Activated CD4-positive, alpha-beta T cell treated with anti-CD3 and anti-CD28 coated beads, Interleukin-2, amount 10 ng/mL, durations not matched to agents 7 days and 5 days (primary cell): ENCODE measurements at regions of chr10 and their contacts with region 1.

Region 1: DNA sequence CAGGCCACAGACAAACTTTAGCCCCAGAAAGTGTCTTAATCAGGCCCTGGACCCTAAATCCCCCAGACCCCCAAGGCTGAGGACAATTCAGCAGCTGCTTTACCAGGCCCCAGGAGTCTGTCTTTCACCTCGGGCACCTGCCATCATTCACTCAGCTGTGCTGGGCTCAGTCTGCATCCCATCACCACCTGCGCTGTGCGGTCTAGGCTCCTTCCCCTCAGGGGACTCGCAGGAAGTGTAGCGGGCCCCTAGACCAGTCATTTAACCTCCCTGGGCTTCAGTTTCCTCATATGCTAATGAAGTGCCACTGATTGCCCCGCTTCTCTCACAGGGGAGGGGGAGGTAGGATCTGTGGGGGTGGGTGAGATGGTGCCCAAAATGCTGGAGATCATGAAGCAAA is 76.4 kb upstream of the ZMIZ1 start:
- DNase-seq: no peak
- H3K4me3 Mint-ChIP-seq: no peak overlapping the region
- H3K27ac Mint-ChIP-seq: no peak overlapping the region
- H3K4me1 Mint-ChIP-seq: peaks cover 2% of the 10 kb centered on the region
- H3K27me3 Mint-ChIP-seq: peaks cover 3% of the 10 kb centered on the region

Region 2: DNA sequence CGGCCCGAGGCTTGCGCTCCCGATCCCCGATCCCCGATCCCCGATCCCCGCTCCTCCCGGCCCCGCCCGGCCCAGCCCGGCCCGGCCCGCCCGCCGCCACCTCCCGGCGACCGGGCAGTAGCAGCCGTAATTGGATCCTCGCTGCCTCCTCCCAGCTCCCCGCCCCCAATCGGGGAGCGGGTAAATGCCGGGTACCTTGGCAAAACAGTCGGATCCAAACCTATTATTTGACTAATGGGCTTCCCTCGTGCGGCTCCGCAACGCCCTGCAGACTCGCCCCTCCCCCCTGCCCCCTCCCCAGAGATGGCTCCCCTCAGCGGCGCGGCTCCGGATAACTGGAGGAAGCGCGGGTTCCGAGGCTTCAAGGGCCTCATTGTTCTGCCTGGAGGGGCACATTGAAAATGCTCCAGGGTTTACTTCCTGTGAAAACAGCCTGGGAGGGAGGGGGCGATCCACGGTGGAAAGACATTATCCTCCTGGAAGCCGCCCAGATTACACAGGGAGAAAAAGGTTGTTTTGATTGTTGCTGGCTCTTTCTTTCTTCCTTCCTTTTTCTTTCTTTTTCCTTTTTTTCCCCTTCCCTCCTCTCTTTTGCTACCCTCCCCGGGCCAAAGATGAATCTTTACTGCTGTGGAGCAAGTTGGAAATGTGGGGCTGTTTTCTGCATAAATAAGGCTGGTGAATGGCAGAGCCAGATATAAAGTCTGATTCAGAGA is 18.3 kb before region 1 on chr10:
- CTCF ChIA-PET with region 1: interaction called, 12 read pairs
- POLR2A ChIA-PET with region 1: no interaction called
- DNase-seq: peak; percentile 49
- H3K4me3 Mint-ChIP-seq: peak overlapping the region; percentile 81
- H3K27ac Mint-ChIP-seq: peak overlapping the region; percentile 92
- H3K4me1 Mint-ChIP-seq: peaks cover 17% of the 10 kb centered on the region
- H3K27me3 Mint-ChIP-seq: peaks cover 1% of the 10 kb centered on the region

Region 3: DNA sequence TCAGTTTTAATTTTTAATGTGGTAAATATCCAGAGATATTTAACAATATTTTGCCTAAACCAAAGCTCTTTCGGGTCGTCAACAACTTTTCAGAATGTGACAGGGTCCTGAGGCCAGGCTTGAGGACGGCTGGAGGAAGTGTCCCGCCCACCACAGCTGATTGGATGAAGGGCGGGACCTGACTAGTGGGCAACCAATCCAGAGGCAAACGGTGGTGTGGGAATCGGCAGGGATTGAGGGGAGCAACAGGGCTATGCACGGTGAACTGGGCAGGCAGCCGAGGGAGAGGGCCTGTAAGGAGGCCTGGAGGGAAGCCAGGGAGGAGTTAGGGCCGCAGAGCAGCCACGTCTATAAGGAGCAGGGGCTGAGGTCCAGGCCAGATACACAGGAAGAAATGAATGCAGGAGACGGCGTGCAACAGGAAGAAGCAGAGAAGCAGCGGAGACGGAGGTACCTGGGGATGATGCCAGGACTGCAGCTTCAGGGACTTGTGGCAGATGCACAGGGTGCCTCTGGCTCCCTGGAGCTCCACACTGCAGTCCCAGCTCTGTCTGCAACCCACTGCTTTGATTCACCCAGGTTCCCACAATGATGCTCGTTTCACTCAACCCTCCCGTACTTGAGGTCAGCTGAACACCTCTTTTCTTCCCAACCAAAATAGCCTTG is 30.4 kb after region 1 on chr10:
- CTCF ChIA-PET with region 1: no interaction called
- POLR2A ChIA-PET with region 1: no interaction called
- DNase-seq: no peak
- H3K4me3 Mint-ChIP-seq: peak overlapping the region; percentile 44
- H3K27ac Mint-ChIP-seq: no peak overlapping the region
- H3K4me1 Mint-ChIP-seq: peaks cover 19% of the 10 kb centered on the region
- H3K27me3 Mint-ChIP-seq: no peaks in the 10 kb centered on the region